Brain microvascular endothelial cell (primary cell): ENCODE measurements at regions of chr3 and their contacts with region 1.

Region 1: GRCh38 chr3:133384331-133385027 is 15.4 kb upstream of the BFSP2 start:
- DNase-seq: peak; percentile 47
- H3K4me3 ChIP-seq: no peak overlapping the region
- H3K27ac ChIP-seq: no peak overlapping the region
- H3K27me3 ChIP-seq: no peaks in the 10 kb centered on the region
- CTCF ChIP-seq: peak; percentile 96

Region 2: DNA sequence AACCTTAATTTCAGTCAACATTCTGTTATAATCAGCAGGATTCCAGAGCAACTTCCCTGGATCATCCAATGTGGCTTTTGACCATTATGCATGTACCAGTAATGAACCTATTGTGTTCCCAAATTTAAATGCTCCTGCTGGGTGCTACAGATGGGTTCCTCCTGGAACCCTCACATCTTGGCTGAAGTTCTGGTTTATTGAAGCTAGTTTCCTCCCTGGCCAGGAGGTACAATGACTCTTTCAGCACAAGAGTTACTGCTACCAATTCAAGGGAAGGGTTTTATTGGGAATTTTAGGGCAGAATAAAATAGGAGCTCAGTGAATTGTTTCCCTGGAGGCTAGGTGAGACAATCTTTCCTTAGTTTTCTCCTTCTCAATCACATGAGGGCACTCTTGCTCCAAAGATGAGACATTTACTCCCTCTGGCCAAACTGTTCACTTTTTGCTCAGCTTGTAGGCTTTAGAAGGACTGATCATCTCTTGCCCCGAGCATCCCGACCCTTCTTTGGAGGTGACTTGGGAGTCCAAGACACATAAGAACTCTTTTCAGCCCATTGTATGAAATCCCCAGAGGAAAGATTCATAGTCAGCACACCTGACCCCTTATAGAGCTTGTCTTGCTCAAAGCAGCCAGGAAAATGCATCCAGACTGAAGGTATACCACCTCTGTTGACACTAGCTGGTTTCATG is 653.4 kb before region 1 on chr3:
- in situ Hi-C with region 1: loop called (anchors 25 kb)
- DNase-seq: peak; percentile 36
- H3K4me3 ChIP-seq: no peak overlapping the region
- H3K27ac ChIP-seq: no peak overlapping the region
- H3K27me3 ChIP-seq: no peaks in the 10 kb centered on the region
- CTCF ChIP-seq: peak; percentile 51

Region 3: GRCh38 chr3:133040696-133041523 is 343.6 kb before region 1 on chr3:
- in situ Hi-C with region 1: loop called (anchors 25 kb)
- DNase-seq: peak; percentile 77
- H3K4me3 ChIP-seq: no peak overlapping the region
- H3K27ac ChIP-seq: no peak overlapping the region
- H3K27me3 ChIP-seq: no peaks in the 10 kb centered on the region
- CTCF ChIP-seq: peak; percentile 90

Region 4: DNA sequence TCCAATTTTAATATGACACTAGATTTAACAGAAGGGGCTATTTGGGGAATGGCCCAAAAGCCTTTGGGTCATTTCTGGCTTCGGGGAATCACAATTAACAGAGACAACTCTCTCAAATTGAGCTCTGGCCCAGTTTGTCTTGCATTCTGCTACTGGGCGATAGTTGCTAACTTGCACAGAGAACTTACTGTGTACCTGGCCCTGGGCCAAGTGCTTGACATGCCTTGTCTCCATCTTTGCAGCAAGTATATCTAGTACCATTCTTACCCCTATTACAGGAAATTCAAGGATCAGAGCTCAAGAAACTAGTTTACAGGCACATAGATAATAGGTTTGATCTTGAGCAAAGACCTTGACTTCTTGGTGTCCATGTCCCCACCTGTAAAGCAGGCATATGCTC is 170.5 kb before region 1 on chr3:
- in situ Hi-C with region 1: no loop called
- DNase-seq: no peak
- H3K4me3 ChIP-seq: no peak overlapping the region
- H3K27ac ChIP-seq: no peak overlapping the region
- H3K27me3 ChIP-seq: no peaks in the 10 kb centered on the region
- CTCF ChIP-seq: no peak

Region 5: DNA sequence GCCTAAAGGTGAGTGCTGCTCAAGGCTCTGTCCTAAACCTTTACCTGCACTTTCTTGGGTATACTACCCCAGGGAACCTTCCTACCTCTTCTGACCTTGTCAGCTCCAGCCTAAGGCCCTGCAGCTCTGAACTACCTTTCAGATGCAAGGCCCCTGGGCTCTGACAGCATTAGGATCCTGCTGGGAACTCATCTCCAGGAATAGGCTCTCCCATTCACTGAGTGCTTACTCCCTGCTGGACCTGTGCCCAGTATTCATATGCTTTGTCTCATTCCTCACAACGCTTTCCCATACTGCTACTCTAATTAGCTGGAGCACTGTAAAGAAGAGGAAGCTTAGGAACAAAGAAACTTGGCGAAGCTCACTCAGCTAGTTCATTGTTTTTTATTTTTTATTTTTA is 565.0 kb after region 1 on chr3:
- in situ Hi-C with region 1: no loop called
- DNase-seq: no peak
- H3K4me3 ChIP-seq: no peak overlapping the region
- H3K27ac ChIP-seq: no peak overlapping the region
- H3K27me3 ChIP-seq: no peaks in the 10 kb centered on the region
- CTCF ChIP-seq: no peak